SK-N-SH (cell line): ENCODE measurements at regions of chr10 and their contacts with region 1.

Region 1: GRCh38 chr10:122112625-122113160 is 123.7 kb downstream of the TACC2 start:
- DNase-seq: peak; percentile 93
- H3K4me3 ChIP-seq: peak overlapping the region; percentile 81 to 82
- H3K27ac ChIP-seq: peak overlapping the region; percentile 75 to 79
- H3K4me1 ChIP-seq: peaks cover 6 to 31% of the 10 kb centered on the region in 2 experiments; a peak in 2 of 4 replicates
- H3K27me3 ChIP-seq: no peaks in the 10 kb centered on the region
- CTCF ChIP-seq: peak; percentile 24
- EP300 ChIP-seq: no peak
- RAD21 ChIP-seq: peak; percentile 55

Region 2: GRCh38 chr10:122098924-122099323 is 13.8 kb before region 1 on chr10:
- CTCF ChIA-PET with region 1: interaction called, 21 read pairs
- POLR2A ChIA-PET with region 1: no interaction called
- DNase-seq: no peak
- H3K4me3 ChIP-seq: no peak overlapping the region
- H3K27ac ChIP-seq: peak overlapping the region in 1 of 2 experiments; percentile 31; a peak in 1 of 4 replicates
- H3K4me1 ChIP-seq: peaks cover 0 to 10% of the 10 kb centered on the region in 2 experiments; a peak in 1 of 4 replicates
- H3K27me3 ChIP-seq: no peaks in the 10 kb centered on the region; the same call in 1 of the 2 replicates
- CTCF ChIP-seq: no peak
- EP300 ChIP-seq: no peak
- RAD21 ChIP-seq: no peak

Region 3: GRCh38 chr10:122126763-122127659 is 14.3 kb after region 1 on chr10:
- CTCF ChIA-PET with region 1: interaction called, 18 read pairs
- POLR2A ChIA-PET with region 1: interaction called, 4 read pairs
- DNase-seq: no peak
- H3K4me3 ChIP-seq: no peak overlapping the region
- H3K27ac ChIP-seq: peak overlapping the region; percentile 51 to 62; a peak in 3 of 4 replicates
- H3K4me1 ChIP-seq: peaks cover 5 to 14% of the 10 kb centered on the region in 2 experiments; a peak in 3 of 4 replicates
- H3K27me3 ChIP-seq: no peaks in the 10 kb centered on the region
- CTCF ChIP-seq: no peak
- EP300 ChIP-seq: peak in 1 of 2 experiments; percentile 42; a peak in 1 of 4 replicates
- RAD21 ChIP-seq: no peak

Region 4: DNA sequence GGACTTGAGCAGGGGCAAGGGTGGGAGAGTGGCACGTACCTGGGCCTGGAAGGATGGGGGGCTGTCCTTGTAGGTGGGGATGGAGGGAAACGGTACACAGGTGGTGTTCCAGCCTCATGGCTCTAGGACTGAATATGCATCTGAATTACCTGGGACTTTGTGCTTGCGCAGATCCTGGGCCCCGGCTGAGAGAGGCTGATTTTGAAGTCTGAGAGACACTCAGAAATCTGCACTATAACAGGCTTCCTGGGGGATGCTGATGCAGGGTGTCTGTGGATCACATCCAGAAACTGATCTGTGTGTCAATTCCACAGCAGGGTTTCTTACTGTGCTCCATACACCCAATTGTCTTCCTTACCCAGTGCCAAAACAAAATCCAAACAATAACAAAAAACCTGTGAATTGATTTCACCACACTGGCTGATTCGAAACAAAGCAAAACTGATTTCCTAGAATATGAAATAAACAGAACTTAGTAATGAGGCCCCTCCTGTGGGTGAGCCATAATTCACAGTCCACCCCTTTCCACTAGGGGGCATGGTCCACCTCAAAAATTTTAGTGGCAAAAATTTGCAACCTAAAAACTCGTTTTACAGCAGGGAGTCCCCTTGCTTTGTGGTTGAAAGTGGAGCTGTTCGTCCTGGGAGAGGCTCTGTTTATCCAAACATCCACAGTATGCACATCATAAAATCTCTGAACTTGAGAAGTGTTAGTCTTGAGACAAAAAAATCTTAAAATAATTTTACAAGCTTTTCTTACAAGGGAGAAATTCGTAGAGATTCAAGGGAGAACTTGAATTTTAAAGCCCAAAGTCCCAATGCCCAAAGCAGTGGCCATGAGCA is 229.8 kb after region 1 on chr10:
- CTCF ChIA-PET with region 1: no interaction called
- POLR2A ChIA-PET with region 1: no interaction called
- DNase-seq: peak; percentile 63
- H3K4me3 ChIP-seq: no peak overlapping the region
- H3K27ac ChIP-seq: no peak overlapping the region
- H3K4me1 ChIP-seq: no peaks in the 10 kb centered on the region
- H3K27me3 ChIP-seq: no peaks in the 10 kb centered on the region
- CTCF ChIP-seq: peak; percentile 76
- EP300 ChIP-seq: no peak
- RAD21 ChIP-seq: peak; percentile 80